Calu3 (cell line): ENCODE measurements at regions of chr1 and their contacts with region 1.

Region 1: GRCh38 chr1:103461161-103462105 is 64.1 kb upstream of the RNPC3 start:
- DNase-seq: no peak
- H3K4me3 Mint-ChIP-seq: no peak overlapping the region
- H3K27ac Mint-ChIP-seq: no peak overlapping the region
- H3K4me1 Mint-ChIP-seq: no peaks in the 10 kb centered on the region
- H3K27me3 Mint-ChIP-seq: no peaks in the 10 kb centered on the region
- CTCF ChIP-seq: no peak

Region 2: DNA sequence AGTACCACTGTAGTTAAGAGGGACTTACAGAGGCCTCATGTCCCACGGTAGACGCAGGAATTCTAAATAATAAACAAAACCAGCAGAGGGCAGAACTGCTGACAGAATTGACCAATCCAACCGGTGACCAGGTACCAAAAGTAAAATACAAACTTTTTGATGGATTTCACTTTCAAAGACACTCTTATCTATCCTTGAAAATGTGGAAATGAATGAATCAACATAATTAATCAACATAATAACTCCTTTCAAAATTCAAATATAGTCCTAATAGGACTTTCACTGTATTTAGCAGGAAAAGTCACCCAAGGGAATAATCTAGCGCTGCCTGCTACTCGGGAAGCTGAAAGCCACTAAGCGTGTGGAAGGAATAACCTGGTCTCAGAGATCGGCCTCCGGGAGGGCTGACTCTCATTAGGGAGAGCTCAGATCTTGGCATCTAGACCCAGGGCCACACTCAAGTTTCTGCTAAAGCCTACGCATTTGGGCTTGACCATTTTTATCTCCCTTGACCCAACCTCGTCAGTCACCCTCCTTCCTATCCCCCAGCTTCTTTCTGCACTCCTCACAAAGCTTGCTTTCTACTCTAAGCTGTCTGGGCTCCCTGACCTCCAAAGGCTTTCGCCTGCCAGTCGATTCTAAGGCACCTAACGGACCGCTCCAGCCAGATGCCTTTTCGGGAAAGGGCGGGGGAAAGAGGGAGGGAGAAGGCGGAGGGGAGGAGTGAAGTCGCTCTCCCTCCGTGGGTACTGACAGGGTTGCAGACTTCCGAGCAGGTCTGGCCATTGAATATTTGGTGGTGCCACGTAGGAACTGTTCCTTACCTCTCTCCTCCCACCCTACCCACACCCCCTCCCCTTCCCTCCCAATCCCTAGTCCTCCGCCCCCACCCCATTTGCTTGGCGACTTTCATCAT is 354.7 kb before region 1 on chr1:
- CTCF ChIA-PET with region 1: interaction called, 8 read pairs
- intact Hi-C with region 1: loop called (anchors 5 kb)
- DNase-seq: peak; percentile 2
- H3K4me3 Mint-ChIP-seq: no peak overlapping the region
- H3K27ac Mint-ChIP-seq: no peak overlapping the region
- H3K4me1 Mint-ChIP-seq: no peaks in the 10 kb centered on the region
- H3K27me3 Mint-ChIP-seq: no peaks in the 10 kb centered on the region
- CTCF ChIP-seq: peak; percentile 18